ENCODE measurements at regions of chr6 and their contacts with region 1.

Region 1: GRCh38 chr6:147506704-147507114 is 1.8 kb upstream of the SAMD5 start:
- DNase-seq: peak; percentile 69 to 81 (median 73)
- ATAC-seq: peak; percentile 80 to 86 (median 82)
- H3K4me3 ChIP-seq: peak overlapping the region; percentile 56 to 85 (median 66)
- H3K27ac ChIP-seq: no peak overlapping the region
- H3K4me1 ChIP-seq: peaks cover 0 to 35% (median 13%) of the 10 kb centered on the region in 12 donors
- H3K27me3 ChIP-seq: peaks cover 0 to 66% (median 4%) of the 10 kb centered on the region in 9 donors
- CTCF ChIP-seq: peak; percentile 66 to 91 (median 87)
- POLR2A ChIP-seq: no peak

Region 2: DNA sequence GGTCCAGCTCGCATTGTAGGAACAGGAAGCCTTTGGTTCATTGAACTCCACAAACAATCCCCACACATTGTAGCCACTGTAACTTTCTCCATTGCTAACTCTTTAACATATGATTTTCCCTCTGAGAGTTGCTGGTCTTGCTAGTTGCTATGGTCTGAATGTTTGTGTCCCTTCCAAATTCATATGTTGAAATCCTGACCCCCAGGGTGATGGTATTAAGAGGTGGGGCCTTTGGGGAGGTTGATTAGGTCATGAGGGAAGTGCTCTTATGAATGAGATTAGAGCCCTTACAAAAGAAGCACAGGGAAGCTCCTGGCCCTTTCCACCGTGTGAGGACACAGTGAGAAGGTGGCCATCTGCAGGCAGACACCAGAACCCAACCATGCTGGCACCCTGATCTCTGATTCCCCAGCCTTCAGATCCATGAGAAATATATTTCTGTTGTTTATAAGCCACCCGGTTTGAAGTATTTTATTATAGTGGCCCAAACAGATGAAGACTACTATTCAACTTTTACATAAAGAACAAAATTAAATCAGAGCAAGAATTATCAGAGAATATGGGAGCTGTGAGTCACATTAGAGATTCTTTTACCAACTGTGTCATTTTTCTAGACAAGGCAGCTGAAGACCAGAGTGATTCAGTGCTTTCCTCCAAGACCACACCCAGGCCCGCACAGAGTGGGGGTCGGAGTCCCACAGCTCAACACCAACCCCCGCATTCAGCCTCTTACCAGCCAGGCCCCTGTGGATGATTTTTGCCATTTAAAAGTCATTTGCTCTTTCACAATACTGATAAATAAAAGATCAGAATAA is 144.7 kb after region 1 on chr6:
- intact Hi-C with region 1: loop called (anchors 1 to 5 kb)
- DNase-seq: peak in 4 of 5 donors; percentile 12 to 59 (median 42)
- ATAC-seq: peak; percentile 89 to 92 (median 91)
- H3K4me3 ChIP-seq: no peak overlapping the region
- H3K27ac ChIP-seq: peak overlapping the region in 1 of 12 donors; percentile 7
- H3K4me1 ChIP-seq: peaks cover 0 to 10% (median 5%) of the 10 kb centered on the region in 12 donors
- H3K27me3 ChIP-seq: no peaks in the 10 kb centered on the region
- CTCF ChIP-seq: peak; percentile 12 to 56 (median 42)
- POLR2A ChIP-seq: no peak

Region 3: DNA sequence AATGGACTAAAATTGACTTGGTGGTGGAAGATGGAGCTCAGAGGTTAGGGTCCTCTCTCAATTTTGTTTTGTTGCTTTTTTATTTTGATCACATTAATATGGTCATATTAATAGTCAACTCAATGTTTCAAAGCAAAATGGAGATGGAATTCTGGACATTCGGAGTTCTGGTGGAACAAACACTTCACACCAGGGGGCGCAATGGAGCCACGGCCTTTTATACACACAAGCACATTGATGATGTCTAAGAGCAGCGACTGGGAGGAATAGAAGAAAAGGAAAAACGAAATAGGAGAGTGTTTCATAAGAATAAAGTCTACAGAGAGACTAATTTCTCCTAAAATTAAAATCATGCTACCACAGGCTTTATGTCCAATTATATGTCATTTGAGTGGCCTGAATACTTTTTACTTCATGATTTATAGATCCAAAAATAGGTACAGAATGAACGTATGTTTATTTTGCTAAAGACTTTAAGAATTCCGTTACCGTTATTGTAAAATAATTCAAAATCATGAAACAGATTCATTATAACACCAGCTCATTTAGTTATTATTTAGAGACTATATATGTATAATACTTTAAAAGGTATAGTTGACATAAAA is 638.3 kb after region 1 on chr6:
- intact Hi-C with region 1: loop called in 2 of 10 experiments (anchors 5 kb)
- DNase-seq: peak; percentile 66 to 79 (median 70)
- ATAC-seq: peak in 2 of 4 donors; percentile 37 to 57
- H3K4me3 ChIP-seq: peak overlapping the region in 2 of 12 donors; percentile 13 to 28
- H3K27ac ChIP-seq: no peak overlapping the region
- H3K4me1 ChIP-seq: no peaks in the 10 kb centered on the region
- H3K27me3 ChIP-seq: no peaks in the 10 kb centered on the region
- CTCF ChIP-seq: peak; percentile 68 to 90 (median 83)
- POLR2A ChIP-seq: no peak

Region 4: GRCh38 chr6:148157542-148158240 is 651.0 kb after region 1 on chr6:
- intact Hi-C with region 1: loop called in 1 of 10 experiments (anchors 5 kb)
- DNase-seq: no peak
- ATAC-seq: no peak
- H3K4me3 ChIP-seq: no peak overlapping the region
- H3K27ac ChIP-seq: no peak overlapping the region
- H3K4me1 ChIP-seq: no peaks in the 10 kb centered on the region
- H3K27me3 ChIP-seq: no peaks in the 10 kb centered on the region
- CTCF ChIP-seq: no peak
- POLR2A ChIP-seq: no peak

Region 5: DNA sequence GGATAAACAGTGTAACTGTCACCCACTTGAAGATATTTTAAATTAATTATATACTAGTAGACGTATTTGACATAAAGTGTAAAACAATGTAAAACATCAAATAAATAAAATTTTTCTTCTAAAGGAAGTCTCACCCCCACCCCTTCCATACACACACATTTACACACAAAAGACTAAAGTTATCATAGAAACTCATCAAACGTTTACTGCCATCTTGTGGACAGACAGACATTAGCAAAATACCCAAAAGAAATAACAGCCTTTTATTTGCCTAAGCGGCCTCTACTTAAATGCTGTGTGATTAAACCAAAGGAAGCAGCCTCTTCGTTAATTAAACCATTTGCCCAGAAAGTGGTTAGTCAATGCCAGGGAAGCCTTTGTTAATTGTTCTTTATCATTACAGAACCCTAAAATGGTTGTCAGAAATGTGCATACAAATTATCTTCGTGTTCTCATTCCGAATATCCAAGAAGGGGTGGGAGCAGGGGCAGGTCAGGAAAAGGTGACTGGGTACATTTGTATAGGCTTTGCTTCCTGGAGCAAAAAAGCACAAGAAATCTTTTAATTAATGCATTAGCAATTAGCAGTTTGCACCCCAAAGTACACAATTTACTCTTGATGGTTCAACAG is 659.7 kb after region 1 on chr6:
- intact Hi-C with region 1: loop called (anchors 1 to 5 kb)
- DNase-seq: no peak
- ATAC-seq: peak in 2 of 4 donors; percentile 44 to 46
- H3K4me3 ChIP-seq: no peak overlapping the region
- H3K27ac ChIP-seq: no peak overlapping the region
- H3K4me1 ChIP-seq: no peaks in the 10 kb centered on the region
- H3K27me3 ChIP-seq: no peaks in the 10 kb centered on the region
- CTCF ChIP-seq: peak; percentile 53 to 78 (median 74)
- POLR2A ChIP-seq: no peak

Region 6: DNA sequence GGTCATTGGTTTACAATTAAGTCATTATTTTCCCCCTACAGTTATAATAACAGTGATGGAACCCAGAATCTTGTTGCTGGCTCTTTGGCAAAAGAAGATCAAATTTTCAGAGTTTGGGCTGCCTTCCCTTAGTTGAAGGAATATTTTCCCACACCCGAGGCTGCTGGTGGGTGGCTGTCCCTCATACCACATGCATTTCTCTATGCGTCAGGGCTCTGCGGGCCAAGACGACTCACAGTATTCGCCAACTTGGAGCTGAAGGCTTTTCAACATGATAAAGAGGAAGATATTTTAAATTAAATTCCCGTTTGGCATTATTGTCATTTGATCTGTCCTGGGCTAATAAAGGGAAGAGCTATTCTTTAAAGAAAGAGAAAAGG is 733.7 kb after region 1 on chr6:
- intact Hi-C with region 1: loop called in 1 of 10 experiments (anchors 10 kb)
- DNase-seq: peak in 4 of 5 donors; percentile 38 to 60 (median 46)
- ATAC-seq: peak in 2 of 4 donors; percentile 56 to 66
- H3K4me3 ChIP-seq: no peak overlapping the region
- H3K27ac ChIP-seq: peak overlapping the region in 11 of 12 donors; percentile 24 to 80 (median 67)
- H3K4me1 ChIP-seq: peaks cover 0 to 56% (median 17%) of the 10 kb centered on the region in 12 donors
- H3K27me3 ChIP-seq: no peaks in the 10 kb centered on the region
- CTCF ChIP-seq: no peak
- POLR2A ChIP-seq: no peak

Measured in heart left ventricle (tissue), 16 donors.